Naive thymus-derived CD4-positive, alpha-beta T cell (primary cell): ENCODE measurements at regions of chr1 and their contacts with region 1.

Region 1: GRCh38 chr1:32933742-32934322 is 30.8 kb downstream of the RNF19B start:
- DNase-seq: peak in 1 of 9 donors; percentile 5
- ATAC-seq: no peak
- H3K4me3 ChIP-seq: no peak overlapping the region
- H3K4me3 Mint-ChIP-seq: no peak overlapping the region
- H3K27ac ChIP-seq: no peak overlapping the region
- H3K27ac Mint-ChIP-seq: no peak overlapping the region
- H3K4me1 ChIP-seq: no peaks in the 10 kb centered on the region
- H3K4me1 Mint-ChIP-seq: peaks cover 0 to 35% (median 0%) of the 10 kb centered on the region in 7 donors
- H3K27me3 ChIP-seq: no peaks in the 10 kb centered on the region
- H3K27me3 Mint-ChIP-seq: no peaks in the 10 kb centered on the region

Region 2: DNA sequence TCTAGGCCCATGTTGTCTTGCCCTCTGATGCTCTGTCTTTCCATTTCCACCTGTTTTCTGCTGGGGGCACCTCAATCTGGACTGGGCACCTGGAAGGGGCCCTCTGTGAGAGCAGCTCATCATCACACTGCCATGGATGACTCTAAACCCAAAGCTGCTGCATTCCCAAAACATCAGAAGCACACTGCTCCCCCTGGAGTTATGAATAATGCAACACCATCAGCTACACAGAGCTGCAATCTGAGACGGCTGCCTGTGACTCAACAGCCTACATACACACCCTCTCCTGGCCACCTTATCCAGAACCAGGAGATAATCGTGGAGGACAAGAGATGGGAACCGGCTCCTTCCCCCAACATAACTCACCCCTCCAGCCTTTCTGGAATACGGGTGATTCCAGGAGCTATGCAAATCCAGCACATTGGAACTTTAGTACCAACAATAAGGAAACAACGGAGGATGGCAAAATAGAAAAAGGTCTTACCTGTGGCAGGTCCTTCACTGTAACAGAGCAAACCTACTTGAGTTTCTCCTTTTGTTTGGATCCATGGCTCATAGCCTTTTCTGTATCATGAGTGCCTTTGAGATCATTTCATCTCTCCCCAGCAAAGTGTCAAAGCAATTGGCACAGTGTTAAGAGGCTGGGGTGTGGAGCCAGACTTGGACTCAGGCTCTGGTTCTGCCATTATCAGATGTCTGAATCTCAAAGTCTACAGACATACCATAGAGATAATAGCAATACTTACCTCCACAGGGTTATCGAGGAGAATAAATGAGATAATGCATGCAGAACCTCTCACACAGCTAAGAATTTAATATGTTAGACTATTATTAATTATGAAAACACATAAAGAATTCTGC is 73.6 kb after region 1 on chr1:
- CTCF ChIA-PET with region 1: interaction called, 46 read pairs
- POLR2A ChIA-PET with region 1: no interaction called
- intact Hi-C with region 1: loop called (anchors 1 kb)
- DNase-seq: peak in 2 of 9 donors; percentile 10 to 19
- ATAC-seq: peak; percentile 83
- H3K4me3 ChIP-seq: no peak overlapping the region
- H3K4me3 Mint-ChIP-seq: no peak overlapping the region
- H3K27ac ChIP-seq: no peak overlapping the region
- H3K27ac Mint-ChIP-seq: peak overlapping the region in 1 of 9 donors; percentile 9
- H3K4me1 ChIP-seq: no peaks in the 10 kb centered on the region
- H3K4me1 Mint-ChIP-seq: peaks cover 0 to 40% (median 3%) of the 10 kb centered on the region in 7 donors
- H3K27me3 ChIP-seq: no peaks in the 10 kb centered on the region
- H3K27me3 Mint-ChIP-seq: no peaks in the 10 kb centered on the region

Region 3: DNA sequence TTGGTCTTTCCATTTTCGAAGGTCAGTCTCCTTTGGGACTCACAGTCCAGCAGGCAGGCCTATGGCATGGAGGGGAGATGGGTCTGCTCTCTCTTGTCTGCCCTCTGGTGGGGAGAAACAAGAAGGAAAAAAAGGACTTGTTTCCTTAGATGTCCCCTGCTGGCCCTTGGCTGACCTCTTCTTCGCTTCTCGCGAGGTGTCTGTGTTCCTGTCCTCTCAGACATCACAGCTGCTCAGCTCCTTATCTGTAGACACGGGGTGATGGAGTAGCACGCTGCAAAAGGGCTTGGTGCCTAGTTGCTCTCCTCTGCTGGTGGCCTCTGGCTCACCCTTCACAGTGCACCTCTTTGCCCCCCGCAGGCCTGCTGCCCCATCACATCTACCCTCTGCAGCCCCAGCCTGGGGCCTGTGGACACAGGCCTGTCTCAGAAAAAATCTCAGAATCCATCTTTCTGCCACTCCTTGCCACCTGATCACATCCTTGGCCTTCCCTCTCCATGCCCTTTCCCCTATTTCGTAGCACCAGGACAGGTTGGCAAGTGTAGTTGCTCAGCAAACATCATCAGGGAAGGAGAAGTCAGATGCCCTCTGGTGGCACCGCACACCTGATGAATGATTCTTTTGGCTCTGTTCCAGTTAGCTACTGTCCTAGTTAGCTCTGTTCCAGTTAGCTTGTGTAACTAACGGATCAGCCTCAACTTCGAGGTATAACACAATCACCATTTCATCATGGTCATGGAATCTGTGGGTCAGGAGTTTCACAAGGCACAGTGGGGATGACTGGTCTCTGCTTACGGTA is 121.6 kb after region 1 on chr1:
- CTCF ChIA-PET with region 1: interaction called, 55 read pairs
- POLR2A ChIA-PET with region 1: no interaction called
- intact Hi-C with region 1: loop called (anchors 1 kb)
- DNase-seq: peak; percentile 2 to 30 (median 22)
- ATAC-seq: peak; percentile 86
- H3K4me3 ChIP-seq: no peak overlapping the region
- H3K4me3 Mint-ChIP-seq: no peak overlapping the region
- H3K27ac ChIP-seq: no peak overlapping the region
- H3K27ac Mint-ChIP-seq: peak overlapping the region in 1 of 9 donors; percentile 62
- H3K4me1 ChIP-seq: no peaks in the 10 kb centered on the region
- H3K4me1 Mint-ChIP-seq: peaks cover 0 to 11% (median 6%) of the 10 kb centered on the region in 7 donors
- H3K27me3 ChIP-seq: no peaks in the 10 kb centered on the region
- H3K27me3 Mint-ChIP-seq: peaks cover 0 to 11% (median 4%) of the 10 kb centered on the region in 5 donors

Region 4: DNA sequence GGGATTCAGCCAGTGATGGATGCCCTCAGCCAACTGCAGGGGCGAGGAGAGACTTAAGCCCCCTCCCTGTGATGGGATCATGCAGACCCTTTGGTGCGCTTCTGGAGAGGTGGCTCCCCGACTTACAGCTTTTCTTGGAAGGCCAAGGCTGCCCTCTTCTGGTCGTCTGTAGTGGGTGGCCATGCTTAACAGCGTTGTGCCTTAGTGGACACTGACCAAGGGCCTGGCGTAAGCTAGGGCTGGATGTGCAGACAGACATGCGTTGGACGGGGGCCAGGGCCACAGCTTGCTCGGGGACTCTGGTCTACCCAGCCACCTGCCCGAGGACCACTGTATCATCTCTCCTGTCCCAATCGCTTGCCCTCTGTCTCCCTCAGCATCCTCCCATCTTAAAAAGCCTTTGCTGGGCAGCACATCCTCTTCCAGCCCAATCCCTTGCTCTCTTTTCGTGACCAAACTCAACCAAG is 152.6 kb after region 1 on chr1:
- CTCF ChIA-PET with region 1: interaction called, 7 read pairs
- POLR2A ChIA-PET with region 1: no interaction called
- intact Hi-C with region 1: loop called (anchors 1 to 10 kb)
- DNase-seq: peak in 2 of 9 donors; percentile 29 to 50
- ATAC-seq: peak; percentile 63
- H3K4me3 ChIP-seq: no peak overlapping the region
- H3K4me3 Mint-ChIP-seq: no peak overlapping the region
- H3K27ac ChIP-seq: no peak overlapping the region
- H3K27ac Mint-ChIP-seq: peak overlapping the region in 3 of 9 donors; percentile 18 to 48 (median 44)
- H3K4me1 ChIP-seq: peaks cover 10 to 19% of the 10 kb centered on the region in 2 donors
- H3K4me1 Mint-ChIP-seq: peaks cover 24 to 61% (median 47%) of the 10 kb centered on the region in 7 donors
- H3K27me3 ChIP-seq: no peaks in the 10 kb centered on the region
- H3K27me3 Mint-ChIP-seq: peaks cover 0 to 28% (median 0%) of the 10 kb centered on the region in 5 donors

Region 5: DNA sequence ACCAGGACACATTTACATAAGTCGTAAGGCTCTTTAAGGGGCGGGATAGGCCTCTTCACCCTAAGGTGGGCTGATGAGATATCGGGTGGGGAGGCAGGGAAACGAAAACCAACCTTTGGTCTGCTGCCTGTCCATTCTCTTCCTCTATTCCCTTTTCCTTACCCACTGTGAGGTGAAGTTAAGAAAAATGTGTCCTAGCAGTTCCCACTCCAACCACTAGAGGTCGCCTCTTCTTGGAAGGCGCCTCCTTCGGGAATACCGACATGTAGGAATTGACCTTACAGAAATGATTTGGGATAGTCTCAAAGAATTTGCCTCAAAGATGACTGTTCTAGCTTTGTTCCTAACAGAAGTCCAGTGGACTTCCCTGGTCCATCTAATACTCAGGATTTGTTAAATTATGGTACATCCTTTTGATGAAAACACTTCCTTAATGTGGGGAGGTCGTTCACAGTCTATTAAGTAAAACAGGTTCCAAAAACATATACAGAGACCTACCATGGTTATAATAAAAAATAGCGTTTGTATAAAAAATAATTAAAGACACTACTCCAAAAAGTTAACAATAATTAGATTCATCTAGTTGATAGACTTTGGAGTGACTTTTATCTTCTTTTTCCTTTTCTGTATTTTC is 161.3 kb after region 1 on chr1:
- CTCF ChIA-PET with region 1: no interaction called
- POLR2A ChIA-PET with region 1: no interaction called
- intact Hi-C with region 1: loop called in 1 of 2 experiments (anchors 1 kb)
- DNase-seq: no peak
- ATAC-seq: no peak
- H3K4me3 ChIP-seq: no peak overlapping the region
- H3K4me3 Mint-ChIP-seq: no peak overlapping the region
- H3K27ac ChIP-seq: no peak overlapping the region
- H3K27ac Mint-ChIP-seq: peak overlapping the region in 1 of 9 donors; percentile 24
- H3K4me1 ChIP-seq: peaks cover 28 to 29% of the 10 kb centered on the region in 2 donors
- H3K4me1 Mint-ChIP-seq: peaks cover 27 to 70% (median 46%) of the 10 kb centered on the region in 7 donors
- H3K27me3 ChIP-seq: no peaks in the 10 kb centered on the region
- H3K27me3 Mint-ChIP-seq: no peaks in the 10 kb centered on the region

Region 6: DNA sequence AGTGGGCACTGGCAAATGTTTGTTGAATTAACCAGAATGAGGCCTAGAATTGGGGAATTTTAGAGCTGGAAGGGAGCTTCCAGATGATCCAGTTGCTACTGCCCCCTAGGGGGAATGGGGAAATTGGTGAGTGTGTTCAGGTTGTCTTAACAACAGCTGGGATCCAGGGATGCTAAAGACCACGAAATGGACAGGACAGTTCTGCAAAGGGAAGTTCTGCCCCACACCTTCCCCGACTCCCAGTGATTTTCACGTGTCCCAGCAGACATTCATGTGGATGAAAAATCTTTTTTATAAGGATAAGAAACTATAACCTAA is 214.1 kb after region 1 on chr1:
- CTCF ChIA-PET with region 1: interaction called, 3 read pairs
- POLR2A ChIA-PET with region 1: no interaction called
- intact Hi-C with region 1: loop called in 1 of 2 experiments (anchors 1 kb)
- DNase-seq: peak in 2 of 9 donors; percentile 12 to 14
- ATAC-seq: no peak
- H3K4me3 ChIP-seq: no peak overlapping the region
- H3K4me3 Mint-ChIP-seq: no peak overlapping the region
- H3K27ac ChIP-seq: no peak overlapping the region
- H3K27ac Mint-ChIP-seq: peak overlapping the region in 2 of 9 donors; percentile 30 to 76
- H3K4me1 ChIP-seq: no peaks in the 10 kb centered on the region
- H3K4me1 Mint-ChIP-seq: peaks cover 0 to 10% (median 4%) of the 10 kb centered on the region in 7 donors
- H3K27me3 ChIP-seq: no peaks in the 10 kb centered on the region
- H3K27me3 Mint-ChIP-seq: no peaks in the 10 kb centered on the region

Region 7: DNA sequence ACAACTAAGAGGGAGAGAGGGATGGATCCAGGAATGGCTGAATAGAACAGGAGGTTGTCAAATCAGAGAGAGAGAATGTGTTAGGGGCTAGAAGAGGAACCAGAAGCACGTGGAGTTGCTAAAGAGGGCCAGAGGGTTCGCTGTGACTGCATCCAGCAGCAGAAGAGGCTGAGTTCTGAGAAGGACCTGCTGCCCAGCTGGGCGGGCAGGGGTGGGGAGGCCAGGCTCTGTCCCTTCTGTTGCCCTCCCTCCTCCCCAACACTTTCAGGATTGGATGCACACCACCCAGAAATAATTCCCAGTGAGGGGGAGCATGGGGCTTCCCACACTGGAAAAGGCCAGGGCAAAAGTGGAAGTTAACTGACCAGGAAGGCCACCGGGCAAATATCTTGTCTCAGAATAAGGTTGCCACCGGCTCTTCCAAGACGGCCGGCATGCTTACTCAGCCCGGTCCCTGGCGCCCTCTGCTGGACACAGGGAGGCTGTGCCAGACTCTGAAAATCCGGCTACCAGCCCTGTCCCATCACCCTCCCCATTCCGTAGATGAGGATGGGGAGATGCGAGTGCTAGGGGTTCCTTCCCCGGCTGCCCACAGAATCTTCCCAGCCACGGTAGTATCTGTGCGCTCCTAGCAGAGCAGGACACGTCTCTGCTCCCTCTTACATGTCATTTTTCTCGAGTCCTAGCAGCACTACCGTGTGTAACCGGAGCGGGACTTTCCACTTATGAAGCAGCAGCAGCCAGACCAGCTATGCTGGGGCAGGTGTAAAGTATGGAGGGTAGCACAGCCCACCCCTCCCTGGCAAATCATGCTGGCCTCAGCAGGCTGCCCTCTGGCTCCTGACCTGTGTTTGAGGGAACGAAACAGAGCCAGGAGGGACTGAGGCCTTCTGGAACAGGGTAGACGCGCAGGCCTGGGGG is 433.9 kb after region 1 on chr1:
- CTCF ChIA-PET with region 1: no interaction called
- POLR2A ChIA-PET with region 1: no interaction called
- intact Hi-C with region 1: loop called in 1 of 2 experiments (anchors 1 kb)
- DNase-seq: peak; percentile 65 to 87 (median 82)
- ATAC-seq: peak; percentile 98
- H3K4me3 ChIP-seq: no peak overlapping the region
- H3K4me3 Mint-ChIP-seq: no peak overlapping the region
- H3K27ac ChIP-seq: no peak overlapping the region
- H3K27ac Mint-ChIP-seq: peak overlapping the region in 1 of 9 donors; percentile 26
- H3K4me1 ChIP-seq: no peaks in the 10 kb centered on the region
- H3K4me1 Mint-ChIP-seq: peaks cover 0 to 2% (median 0%) of the 10 kb centered on the region in 7 donors
- H3K27me3 ChIP-seq: no peaks in the 10 kb centered on the region
- H3K27me3 Mint-ChIP-seq: peaks cover 0 to 11% (median 0%) of the 10 kb centered on the region in 5 donors